ENCODE measurements at regions of chr17 and their contacts with region 1.

Region 1: DNA sequence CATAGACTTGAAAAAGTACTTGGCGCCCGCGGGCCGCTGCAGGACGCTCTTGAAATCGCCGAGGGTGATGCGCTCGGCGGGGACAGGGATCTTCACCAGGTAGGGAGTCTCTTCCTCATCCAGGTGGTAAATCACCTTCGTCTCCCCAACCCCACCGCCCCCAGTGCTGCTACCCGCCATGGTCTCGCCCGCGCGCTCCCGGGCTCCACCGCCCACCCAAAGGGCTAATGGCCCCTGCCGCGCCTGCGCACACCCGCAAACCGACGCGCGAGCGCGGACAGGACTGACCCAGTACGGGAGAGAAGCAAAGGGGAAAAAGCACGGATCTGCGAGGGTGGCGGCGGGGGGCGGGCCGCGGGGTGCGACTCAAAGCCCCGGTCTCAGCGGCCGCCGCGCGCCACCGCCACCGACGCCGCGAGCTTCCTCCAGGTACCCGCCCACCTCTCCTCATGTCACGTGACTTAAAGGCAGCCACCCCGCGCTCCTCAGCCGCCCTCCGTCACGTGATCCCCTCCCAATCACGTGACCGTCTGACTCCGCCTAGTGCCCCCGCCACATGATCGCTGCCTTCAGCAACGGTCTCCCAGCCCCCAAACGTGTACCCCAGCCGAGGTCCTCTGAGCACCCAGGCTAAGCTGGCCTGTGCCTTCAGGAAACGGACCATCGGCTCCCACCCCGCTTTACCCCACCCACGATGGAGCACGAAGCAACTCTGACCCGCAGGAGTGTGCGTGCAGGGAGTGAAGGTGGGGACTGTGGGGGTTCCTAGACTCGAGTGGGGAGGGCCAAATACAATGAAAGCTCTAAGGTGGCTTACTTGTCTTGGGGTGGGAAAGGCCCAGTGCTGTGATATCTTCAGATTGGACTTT is at the start of gene DVL2:
- DNase-seq: peak; percentile 88 to 97 (median 95)
- ATAC-seq: peak; percentile 48
- H3K4me3 ChIP-seq: peak within 1 kb of the TSS; percentile 86 to 91
- H3K4me3 Mint-ChIP-seq: peak within 1 kb of the TSS; percentile 96
- H3K27ac ChIP-seq: peak within 1 kb of the TSS; percentile 73 to 76
- H3K27ac Mint-ChIP-seq: peak within 1 kb of the TSS; percentile 93
- H3K4me1 ChIP-seq: peaks cover 32% of the 10 kb centered on the region
- H3K4me1 Mint-ChIP-seq: peaks cover 42% of the 10 kb centered on the region
- H3K27me3 ChIP-seq: no peaks in the 10 kb centered on the region
- H3K27me3 Mint-ChIP-seq: no peaks in the 10 kb centered on the region
- CTCF ChIP-seq: no peak
- total RNA-seq, gene DVL2: 46.9 to 49.3 TPM

Region 2: DNA sequence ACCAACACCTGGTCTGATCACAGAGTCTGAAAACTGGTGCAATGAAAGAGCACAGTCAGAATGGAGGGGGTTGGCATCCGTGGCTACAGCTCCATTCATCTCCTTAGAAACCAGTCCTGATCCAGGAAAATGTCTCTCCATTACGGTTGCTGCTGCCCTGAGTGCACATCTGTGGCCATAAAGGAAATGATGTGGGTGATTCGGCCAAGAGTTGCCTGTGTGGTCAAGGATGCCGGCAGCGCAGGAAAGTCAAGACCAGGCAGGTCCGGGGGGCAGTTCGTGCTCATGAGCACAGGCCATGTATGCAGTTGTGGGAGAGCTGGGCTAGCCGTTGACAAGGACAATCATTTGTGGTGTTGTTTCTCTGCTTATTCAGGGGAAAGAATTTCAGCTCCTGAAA is 472.5 kb before region 1 on chr17:
- CTCF ChIA-PET with region 1: no interaction called
- POLR2A ChIA-PET with region 1: no interaction called
- intact Hi-C with region 1: no loop called
- DNase-seq: no peak
- ATAC-seq: no peak
- H3K4me3 ChIP-seq: no peak overlapping the region
- H3K4me3 Mint-ChIP-seq: no peak overlapping the region
- H3K27ac ChIP-seq: no peak overlapping the region
- H3K27ac Mint-ChIP-seq: no peak overlapping the region
- H3K4me1 ChIP-seq: peaks cover 18% of the 10 kb centered on the region
- H3K4me1 Mint-ChIP-seq: peaks cover 16% of the 10 kb centered on the region
- H3K27me3 ChIP-seq: no peaks in the 10 kb centered on the region
- H3K27me3 Mint-ChIP-seq: no peaks in the 10 kb centered on the region
- CTCF ChIP-seq: no peak

Region 3: GRCh38 chr17:7204828-7205461 is 29.4 kb before region 1 on chr17:
- CTCF ChIA-PET with region 1: no interaction called
- POLR2A ChIA-PET with region 1: no interaction called
- intact Hi-C with region 1: loop called (anchors 1 kb)
- DNase-seq: peak; percentile 87 to 100 (median 96)
- ATAC-seq: peak; percentile 84
- H3K4me3 ChIP-seq: peak overlapping the region; percentile 55 to 73
- H3K4me3 Mint-ChIP-seq: peak overlapping the region; percentile 87
- H3K27ac ChIP-seq: peak overlapping the region; percentile 90
- H3K27ac Mint-ChIP-seq: peak overlapping the region; percentile 91
- H3K4me1 ChIP-seq: peaks cover 20% of the 10 kb centered on the region
- H3K4me1 Mint-ChIP-seq: peaks cover 29% of the 10 kb centered on the region
- H3K27me3 ChIP-seq: no peaks in the 10 kb centered on the region
- H3K27me3 Mint-ChIP-seq: no peaks in the 10 kb centered on the region
- CTCF ChIP-seq: no peak

Region 4: DNA sequence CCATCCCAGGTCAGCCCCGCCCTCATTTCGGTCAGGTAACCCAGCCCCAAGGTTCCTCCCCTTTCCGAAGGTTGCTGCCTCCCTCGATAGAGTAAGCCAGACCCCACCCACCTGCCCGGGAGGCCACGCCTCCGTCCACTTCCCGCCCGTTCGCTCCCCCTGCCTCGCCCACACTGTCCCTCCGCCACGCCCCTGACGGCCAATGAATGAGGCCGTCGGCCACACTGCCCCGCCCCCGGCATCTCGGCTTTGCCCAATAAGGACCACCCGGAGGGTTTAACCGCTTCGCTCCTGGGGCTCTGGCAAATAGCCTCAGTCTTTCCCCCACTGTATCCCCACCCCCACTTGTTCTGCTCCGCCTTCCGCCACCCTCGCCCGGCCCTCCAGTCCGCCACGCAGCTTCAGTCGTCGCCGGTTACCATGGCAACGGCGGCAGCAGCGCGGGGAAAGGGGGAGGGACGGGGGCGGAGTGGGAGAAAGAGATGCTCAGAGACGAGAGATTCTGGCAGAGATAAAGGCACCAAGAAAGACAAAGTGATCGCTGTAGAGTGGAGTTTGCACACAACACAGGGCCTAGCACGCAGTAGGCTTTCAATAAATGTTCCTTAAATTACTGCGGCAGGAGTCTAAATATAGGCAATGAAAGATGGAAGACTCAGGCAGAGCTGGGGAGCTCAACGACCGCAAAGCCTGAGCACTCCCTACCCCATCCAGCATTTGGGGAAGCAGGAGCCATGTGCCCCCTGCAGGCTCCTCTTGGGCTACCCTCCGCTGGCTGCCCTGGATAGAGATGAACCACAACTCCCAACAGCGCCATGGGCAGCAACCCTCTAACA is 19.8 kb before region 1 on chr17:
- CTCF ChIA-PET with region 1: interaction called, 20 read pairs
- POLR2A ChIA-PET with region 1: interaction called, 26 read pairs
- intact Hi-C with region 1: loop called (anchors 1 kb)
- DNase-seq: peak; percentile 97 to 100 (median 98)
- ATAC-seq: peak; percentile 75
- H3K4me3 ChIP-seq: peak overlapping the region; percentile 36 to 56
- H3K4me3 Mint-ChIP-seq: peak overlapping the region; percentile 90
- H3K27ac ChIP-seq: peak overlapping the region; percentile 80 to 95
- H3K27ac Mint-ChIP-seq: peak overlapping the region; percentile 95
- H3K4me1 ChIP-seq: peaks cover 51% of the 10 kb centered on the region
- H3K4me1 Mint-ChIP-seq: peaks cover 61% of the 10 kb centered on the region
- H3K27me3 ChIP-seq: no peaks in the 10 kb centered on the region
- H3K27me3 Mint-ChIP-seq: no peaks in the 10 kb centered on the region
- CTCF ChIP-seq: peak; percentile 52

Region 5: DNA sequence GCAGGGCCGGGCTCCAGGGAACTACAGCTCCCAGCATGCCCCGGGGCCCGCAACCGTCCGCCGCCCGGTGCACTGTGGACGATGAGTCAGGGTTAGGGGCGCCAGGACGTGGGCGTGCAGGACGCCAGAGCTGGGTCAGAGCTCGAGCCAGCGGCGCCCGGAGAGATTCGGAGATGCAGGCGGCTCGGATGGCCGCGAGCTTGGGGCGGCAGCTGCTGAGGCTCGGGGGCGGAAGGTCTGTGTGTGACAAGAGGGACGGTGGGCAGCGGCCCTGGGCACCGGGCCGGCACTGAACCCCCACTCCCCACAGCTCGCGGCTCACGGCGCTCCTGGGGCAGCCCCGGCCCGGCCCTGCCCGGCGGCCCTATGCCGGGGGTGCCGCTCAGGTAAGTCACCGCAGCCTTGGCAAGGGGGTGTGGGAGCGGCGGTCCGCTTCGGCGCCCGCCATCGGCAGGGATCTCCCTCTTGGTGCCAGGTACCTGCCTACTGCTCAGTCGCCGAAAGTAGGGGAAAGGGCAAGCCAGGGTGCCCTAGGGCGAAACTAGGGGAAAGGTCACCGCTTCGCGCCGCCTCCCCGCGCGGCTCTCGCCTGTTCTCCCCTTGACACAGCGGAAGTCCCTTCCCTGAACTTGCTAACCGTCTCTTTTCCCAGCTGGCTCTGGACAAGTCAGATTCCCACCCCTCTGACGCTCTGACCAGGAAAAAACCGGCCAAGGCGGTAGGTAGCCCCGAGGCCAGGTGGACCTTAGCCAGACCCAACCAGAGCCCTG is 14.3 kb before region 1 on chr17 and contains the starts of genes ACADVL and DLG4:
- CTCF ChIA-PET with region 1: interaction called, 24 read pairs
- POLR2A ChIA-PET with region 1: interaction called, 26 read pairs
- intact Hi-C with region 1: loop called (anchors 1 kb)
- DNase-seq: peak in 8 of 9 experiments; percentile 67 to 86 (median 82)
- ATAC-seq: peak; percentile 54
- H3K4me3 ChIP-seq: peak within 1 kb of the TSS; percentile 74 to 97
- H3K4me3 Mint-ChIP-seq: peak within 1 kb of the TSS; percentile 91
- H3K27ac ChIP-seq: peak within 1 kb of the TSS; percentile 35 to 86
- H3K27ac Mint-ChIP-seq: peak within 1 kb of the TSS; percentile 94
- H3K4me1 ChIP-seq: peaks cover 52% of the 10 kb centered on the region
- H3K4me1 Mint-ChIP-seq: peaks cover 55% of the 10 kb centered on the region
- H3K27me3 ChIP-seq: no peaks in the 10 kb centered on the region
- H3K27me3 Mint-ChIP-seq: no peaks in the 10 kb centered on the region
- CTCF ChIP-seq: no peak
- total RNA-seq, gene ACADVL: 264 to 275 TPM
- total RNA-seq, gene DLG4: 5.8 to 8.1 TPM